HEK293 (cell line): ENCODE measurements at regions of chr1 and their contacts with region 1.

Region 1: GRCh38 chr1:33055210-33056008 is 18.7 kb upstream of the AK2 start:
- H3K4me3 ChIP-seq: no peak overlapping the region
- H3K27ac ChIP-seq: no peak overlapping the region
- H3K4me1 ChIP-seq: no peaks in the 10 kb centered on the region
- CTCF ChIP-seq: peak; percentile 66

Region 2: DNA sequence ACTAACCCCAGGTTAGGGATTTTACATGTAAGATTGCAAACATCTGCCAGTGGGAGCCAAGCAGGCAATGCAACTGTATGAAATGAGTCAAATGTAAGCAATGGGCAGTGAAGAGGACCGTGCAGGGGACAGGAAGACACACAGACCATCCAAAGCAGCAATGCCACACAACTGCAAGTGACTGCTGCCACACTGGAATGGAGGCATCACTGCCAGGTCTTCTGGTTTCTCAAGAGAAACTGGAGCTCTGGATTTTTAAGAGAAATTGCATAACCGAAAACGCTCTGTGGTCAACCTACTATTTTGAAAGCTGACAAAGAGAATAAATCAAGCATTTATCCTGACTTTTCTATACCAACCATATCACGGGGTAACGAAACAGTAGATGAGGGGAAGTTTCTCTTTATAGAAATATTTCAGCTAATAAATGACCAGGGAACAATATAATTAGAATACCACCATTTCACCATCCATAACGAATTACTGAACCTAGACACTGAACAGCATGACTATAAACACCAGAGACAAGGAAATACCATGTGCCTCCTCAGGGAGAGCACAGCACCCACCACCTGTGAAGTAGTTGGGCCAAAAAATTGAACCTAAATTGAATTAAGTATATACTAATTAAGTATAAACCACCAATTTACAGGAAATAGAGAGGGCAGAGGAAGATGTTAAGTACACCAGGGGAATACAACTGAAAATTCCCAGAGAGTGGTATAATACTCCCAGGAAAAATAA is 23.1 kb before region 1 on chr1:
- CTCF ChIA-PET with region 1: interaction called, 14 read pairs
- POLR2A ChIA-PET with region 1: interaction called, 3 read pairs
- H3K4me3 ChIP-seq: no peak overlapping the region
- H3K27ac ChIP-seq: no peak overlapping the region
- H3K4me1 ChIP-seq: peaks cover 14% of the 10 kb centered on the region
- CTCF ChIP-seq: no peak